PC-3 (cell line): ENCODE measurements at regions of chr2 and their contacts with region 1.

Region 1: GRCh38 chr2:27441958-27442919 is at the start of gene KRTCAP3:
- DNase-seq: peak; percentile 14
- ATAC-seq: no peak
- H3K4me3 ChIP-seq: no peak within 1 kb of the TSS
- H3K27ac ChIP-seq: no peak within 1 kb of the TSS
- H3K4me1 ChIP-seq: peaks cover 11% of the 10 kb centered on the region
- H3K27me3 ChIP-seq: no peaks in the 10 kb centered on the region
- CTCF ChIP-seq: no peak
- total RNA-seq, gene KRTCAP3: 0.22 TPM in 1 of 2 replicates, not detected in the other

Region 2: DNA sequence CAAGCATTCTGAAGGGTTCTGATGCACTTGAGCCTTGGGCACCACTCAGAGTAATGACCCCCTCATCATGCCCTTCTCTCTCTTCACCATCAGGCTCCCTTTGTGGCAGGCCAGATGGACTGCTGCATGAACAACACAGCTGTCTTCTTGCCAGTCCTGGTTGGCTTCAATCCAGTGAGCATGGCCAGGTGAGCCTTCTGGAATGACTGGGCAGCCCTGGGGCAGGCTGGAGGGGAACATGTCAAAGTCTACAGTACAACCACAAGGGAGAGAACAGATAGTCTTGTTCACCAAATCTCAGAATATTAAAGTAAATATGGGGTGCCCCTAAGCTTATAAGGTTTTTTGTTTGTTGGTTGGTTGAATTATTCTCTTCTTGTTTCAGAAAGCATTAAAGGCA is 58.8 kb after region 1 on chr2:
- CTCF ChIA-PET with region 1: interaction called, 11 read pairs
- POLR2A ChIA-PET with region 1: no interaction called
- intact Hi-C with region 1: no loop called
- DNase-seq: peak; percentile 68
- ATAC-seq: no peak
- H3K4me3 ChIP-seq: no peak overlapping the region
- H3K27ac ChIP-seq: no peak overlapping the region
- H3K4me1 ChIP-seq: no peaks in the 10 kb centered on the region
- H3K27me3 ChIP-seq: no peaks in the 10 kb centered on the region
- CTCF ChIP-seq: no peak

Region 3: GRCh38 chr2:27942612-27943547 is 500.6 kb after region 1 on chr2:
- CTCF ChIA-PET with region 1: no interaction called
- POLR2A ChIA-PET with region 1: no interaction called
- intact Hi-C with region 1: no loop called
- DNase-seq: no peak
- ATAC-seq: no peak
- H3K4me3 ChIP-seq: no peak overlapping the region
- H3K27ac ChIP-seq: no peak overlapping the region
- H3K4me1 ChIP-seq: no peaks in the 10 kb centered on the region
- H3K27me3 ChIP-seq: no peaks in the 10 kb centered on the region
- CTCF ChIP-seq: no peak